Gastrocnemius medialis (tissue), 4 donors: ENCODE measurements at regions of chrX and their contacts with region 1.

Region 1: DNA sequence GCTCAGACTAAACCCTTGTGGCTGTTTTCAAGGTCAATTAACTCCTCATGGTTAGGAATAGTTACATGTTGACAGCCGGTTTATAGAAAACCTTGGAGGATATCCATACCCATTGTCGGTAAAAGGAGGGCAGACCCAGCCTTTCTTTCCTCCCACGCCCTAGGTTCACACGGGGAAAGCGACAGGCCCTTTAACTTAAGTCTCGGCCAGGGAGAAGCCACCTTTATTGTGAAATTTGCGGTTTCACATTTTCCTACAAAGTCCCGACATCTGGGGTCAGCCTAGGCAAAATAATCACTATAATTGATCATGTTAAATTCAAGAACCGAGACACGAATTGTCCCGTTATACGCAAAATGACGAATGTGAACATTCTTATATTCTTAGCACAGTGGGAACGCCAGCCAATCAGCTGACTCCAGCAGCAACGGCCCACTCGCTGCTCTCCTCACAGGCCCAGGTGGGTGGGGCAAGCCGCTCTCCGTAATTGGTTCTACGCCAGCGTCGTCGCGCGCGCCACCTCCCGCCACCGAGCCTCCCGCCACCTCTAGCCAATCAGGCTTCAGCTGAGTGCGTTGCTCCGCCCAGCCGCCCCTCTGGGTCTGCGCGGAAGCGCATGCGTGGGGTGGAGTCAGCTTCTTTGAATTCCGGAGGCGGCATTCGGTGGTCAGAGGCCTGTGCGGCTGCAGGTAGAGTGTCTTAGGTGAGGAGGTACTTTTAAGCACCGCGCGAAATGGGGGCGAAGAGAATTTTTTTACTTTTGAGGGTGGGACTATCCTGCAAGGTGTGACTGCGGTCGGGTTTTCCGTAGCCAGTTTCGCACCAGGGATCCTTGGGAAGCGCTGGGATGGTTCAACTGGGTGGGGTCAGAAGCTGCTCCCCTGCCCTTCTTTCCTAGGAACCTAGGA is at the start of gene CENPI:
- DNase-seq: peak; percentile 83 to 92
- ATAC-seq: peak; percentile 97 to 98
- H3K4me3 ChIP-seq: peak within 1 kb of the TSS; percentile 35 to 61 (median 60)
- H3K27ac ChIP-seq: peak within 1 kb of the TSS; percentile 76 to 88 (median 88)
- H3K4me1 ChIP-seq: no peaks in the 10 kb centered on the region
- H3K27me3 ChIP-seq: no peaks in the 10 kb centered on the region
- CTCF ChIP-seq: no peak
- POLR2A ChIP-seq: peak in 1 of 2 donors; percentile 62
- total RNA-seq, gene CENPI: 0.62 to 0.66 TPM in 2 of 4 donors, not detected in the others

Region 2: DNA sequence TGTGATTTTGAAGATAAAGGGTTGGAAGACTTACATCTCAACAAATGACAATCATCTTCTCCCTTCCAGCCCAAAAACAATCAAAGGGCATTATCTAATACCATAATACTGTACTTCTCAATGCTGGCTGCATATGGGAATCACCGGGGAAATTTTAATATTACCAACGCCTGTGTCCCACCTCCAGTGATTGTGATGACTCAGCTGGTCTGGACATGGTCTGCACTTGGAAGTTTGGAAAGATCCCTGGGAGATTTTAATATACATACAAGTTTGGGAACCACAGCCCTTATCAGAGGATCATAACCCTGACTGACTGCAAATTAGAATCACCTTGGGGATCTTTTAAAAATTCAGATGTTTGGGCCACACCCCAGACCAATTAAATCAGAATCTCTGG is 98.3 kb before region 1 on chrX:
- in situ Hi-C with region 1: no loop called
- intact Hi-C with region 1: no loop called
- DNase-seq: no peak
- ATAC-seq: no peak
- H3K4me3 ChIP-seq: no peak overlapping the region
- H3K27ac ChIP-seq: no peak overlapping the region
- H3K4me1 ChIP-seq: no peaks in the 10 kb centered on the region
- H3K27me3 ChIP-seq: no peaks in the 10 kb centered on the region
- CTCF ChIP-seq: no peak
- POLR2A ChIP-seq: no peak

Region 3: DNA sequence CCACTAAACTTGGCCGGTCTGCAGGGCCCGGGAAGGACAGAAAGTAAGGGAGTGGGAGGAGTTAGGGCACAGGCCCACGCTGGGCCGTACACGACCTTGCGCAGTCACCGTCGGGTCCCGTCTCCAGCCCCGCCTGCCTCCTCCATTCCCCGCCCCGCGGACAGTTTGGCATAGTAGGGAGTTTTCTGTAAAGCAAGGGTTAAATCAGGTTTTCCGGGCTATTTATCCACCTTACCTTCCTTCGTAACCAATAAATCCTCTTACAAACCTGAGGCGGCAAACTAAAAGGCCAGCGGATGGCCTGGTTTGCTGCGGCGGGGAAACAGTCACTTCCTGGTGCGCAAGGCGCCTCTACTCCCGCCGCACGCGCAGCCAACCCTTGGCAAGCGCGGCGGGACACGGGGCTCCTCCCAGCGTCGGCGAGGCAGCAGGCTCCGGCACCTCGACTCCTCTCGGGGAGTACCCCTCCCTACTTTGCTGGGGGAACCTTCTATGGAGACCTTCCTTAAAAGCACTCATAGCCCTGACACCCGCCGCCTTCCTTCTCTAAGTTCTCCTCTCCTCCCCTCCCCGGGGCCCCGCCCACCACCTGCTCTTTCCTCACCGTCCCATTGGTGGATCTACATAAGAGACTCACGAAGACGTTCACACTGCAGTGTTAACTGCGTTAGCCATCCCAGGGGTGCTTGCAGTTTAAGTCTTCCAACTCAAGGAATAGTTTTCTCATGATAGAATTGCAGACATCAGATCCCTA is 46.1 kb before region 1 on chrX and contains the start of gene TRMT2B:
- in situ Hi-C with region 1: loop called in 1 of 4 experiments (anchors 5 kb)
- intact Hi-C with region 1: loop called (anchors 1 kb)
- DNase-seq: peak; percentile 50 to 80
- ATAC-seq: peak; percentile 95 to 96
- H3K4me3 ChIP-seq: peak within 1 kb of the TSS; percentile 63 to 83 (median 74)
- H3K27ac ChIP-seq: peak within 1 kb of the TSS; percentile 86 to 95 (median 92)
- H3K4me1 ChIP-seq: peaks cover 4% of the 10 kb centered on the region in 2 donors
- H3K27me3 ChIP-seq: no peaks in the 10 kb centered on the region
- CTCF ChIP-seq: no peak
- POLR2A ChIP-seq: peak; percentile 45 to 47
- total RNA-seq, gene TRMT2B: 11.9 to 29.9 (median 14.1) TPM

Region 4: GRCh38 chrX:101117701-101118100 is 19.9 kb after region 1 on chrX:
- in situ Hi-C with region 1: no loop called
- intact Hi-C with region 1: no loop called
- DNase-seq: no peak
- ATAC-seq: no peak
- H3K4me3 ChIP-seq: no peak overlapping the region
- H3K27ac ChIP-seq: no peak overlapping the region
- H3K4me1 ChIP-seq: no peaks in the 10 kb centered on the region
- H3K27me3 ChIP-seq: no peaks in the 10 kb centered on the region
- CTCF ChIP-seq: no peak
- POLR2A ChIP-seq: no peak

Region 5: DNA sequence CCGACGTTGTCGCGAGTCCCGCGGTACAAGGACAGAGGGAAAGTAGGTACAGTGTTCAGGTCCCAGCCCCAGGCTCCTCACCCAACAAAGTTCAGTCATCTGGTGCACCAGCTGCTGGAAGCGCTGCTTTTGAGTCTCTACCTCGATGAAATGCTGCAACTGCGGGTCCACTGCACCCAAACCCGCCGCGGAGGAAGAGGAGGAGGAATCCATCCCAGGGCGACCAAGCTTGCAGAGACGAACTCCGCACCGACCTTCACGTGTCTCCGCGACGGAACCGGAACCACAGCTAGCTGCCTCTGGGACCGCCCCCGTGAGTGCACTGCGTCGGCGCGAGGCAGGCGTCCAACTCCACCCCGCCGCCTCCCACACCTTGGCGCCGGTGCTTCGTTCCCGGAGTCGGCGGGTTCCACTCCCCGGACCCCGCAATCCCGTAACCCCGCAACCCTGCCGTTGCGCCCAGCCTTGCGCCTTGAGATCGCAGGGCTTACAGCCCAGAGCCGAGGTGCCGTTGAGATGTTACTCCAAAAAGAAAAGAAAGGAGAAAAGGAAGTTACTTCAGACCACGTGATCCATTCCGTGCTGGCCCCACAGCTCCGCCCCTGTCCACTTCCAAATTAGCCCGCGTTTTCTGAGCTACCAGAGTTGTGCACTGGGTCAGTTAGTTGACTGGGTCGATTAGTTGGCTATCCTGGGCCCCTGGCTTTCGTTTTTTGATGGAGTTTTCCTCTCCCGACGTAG is 250.8 kb after region 1 on chrX and contains the start of gene TIMM8A:
- in situ Hi-C with region 1: no loop called
- intact Hi-C with region 1: loop called (anchors 5 kb)
- DNase-seq: peak; percentile 75
- ATAC-seq: peak; percentile 92 to 96
- H3K4me3 ChIP-seq: peak within 1 kb of the TSS; percentile 71 to 87 (median 72)
- H3K27ac ChIP-seq: peak within 1 kb of the TSS; percentile 85 to 97 (median 91)
- H3K4me1 ChIP-seq: peaks cover 0 to 3% of the 10 kb centered on the region in 2 donors
- H3K27me3 ChIP-seq: no peaks in the 10 kb centered on the region
- CTCF ChIP-seq: no peak
- POLR2A ChIP-seq: peak; percentile 53 to 65
- total RNA-seq, gene TIMM8A: 1.9 to 9.5 (median 4.9) TPM